Activated B cell treated with CpG ODN at 0.5 μM for 24 hours (primary cell): ENCODE measurements at regions of chr10 and their contacts with region 1.

Region 1: GRCh38 chr10:93702211-93703001 is at the start of gene FRA10AC1:
- DNase-seq: peak; percentile 87
- ATAC-seq: peak; percentile 88
- H3K4me3 Mint-ChIP-seq: no peak within 1 kb of the TSS
- H3K27ac Mint-ChIP-seq: no peak within 1 kb of the TSS
- H3K4me1 Mint-ChIP-seq: peaks cover 11% of the 10 kb centered on the region
- H3K27me3 Mint-ChIP-seq: no peaks in the 10 kb centered on the region
- CTCF ChIP-seq: no peak
- total RNA-seq, gene FRA10AC1: 20.3 and 24.8 TPM in 2 replicates

Region 2: GRCh38 chr10:92290837-92291615 is 1411.4 kb before region 1 on chr10 and contains the starts of genes CPEB3 and MARCHF5:
- CTCF ChIA-PET with region 1: no interaction called
- POLR2A ChIA-PET with region 1: no interaction called
- intact Hi-C with region 1: loop called (anchors 10 kb)
- DNase-seq: peak; percentile 87
- ATAC-seq: peak; percentile 97
- H3K4me3 Mint-ChIP-seq: peak within 1 kb of the TSS; percentile 96
- H3K27ac Mint-ChIP-seq: peak within 1 kb of the TSS; percentile 84
- H3K4me1 Mint-ChIP-seq: peaks cover 28% of the 10 kb centered on the region
- H3K27me3 Mint-ChIP-seq: no peaks in the 10 kb centered on the region
- CTCF ChIP-seq: no peak
- total RNA-seq, gene CPEB3: 2.2 and 2.5 TPM in 2 replicates
- total RNA-seq, gene MARCHF5: 21.6 and 26.5 TPM in 2 replicates

Region 3: GRCh38 chr10:92552310-92552709 is 1150.1 kb before region 1 on chr10:
- CTCF ChIA-PET with region 1: no interaction called
- POLR2A ChIA-PET with region 1: no interaction called
- intact Hi-C with region 1: no loop called
- DNase-seq: no peak
- ATAC-seq: no peak
- H3K4me3 Mint-ChIP-seq: no peak overlapping the region
- H3K27ac Mint-ChIP-seq: no peak overlapping the region
- H3K4me1 Mint-ChIP-seq: peaks cover 17% of the 10 kb centered on the region
- H3K27me3 Mint-ChIP-seq: no peaks in the 10 kb centered on the region
- CTCF ChIP-seq: no peak

Region 4: DNA sequence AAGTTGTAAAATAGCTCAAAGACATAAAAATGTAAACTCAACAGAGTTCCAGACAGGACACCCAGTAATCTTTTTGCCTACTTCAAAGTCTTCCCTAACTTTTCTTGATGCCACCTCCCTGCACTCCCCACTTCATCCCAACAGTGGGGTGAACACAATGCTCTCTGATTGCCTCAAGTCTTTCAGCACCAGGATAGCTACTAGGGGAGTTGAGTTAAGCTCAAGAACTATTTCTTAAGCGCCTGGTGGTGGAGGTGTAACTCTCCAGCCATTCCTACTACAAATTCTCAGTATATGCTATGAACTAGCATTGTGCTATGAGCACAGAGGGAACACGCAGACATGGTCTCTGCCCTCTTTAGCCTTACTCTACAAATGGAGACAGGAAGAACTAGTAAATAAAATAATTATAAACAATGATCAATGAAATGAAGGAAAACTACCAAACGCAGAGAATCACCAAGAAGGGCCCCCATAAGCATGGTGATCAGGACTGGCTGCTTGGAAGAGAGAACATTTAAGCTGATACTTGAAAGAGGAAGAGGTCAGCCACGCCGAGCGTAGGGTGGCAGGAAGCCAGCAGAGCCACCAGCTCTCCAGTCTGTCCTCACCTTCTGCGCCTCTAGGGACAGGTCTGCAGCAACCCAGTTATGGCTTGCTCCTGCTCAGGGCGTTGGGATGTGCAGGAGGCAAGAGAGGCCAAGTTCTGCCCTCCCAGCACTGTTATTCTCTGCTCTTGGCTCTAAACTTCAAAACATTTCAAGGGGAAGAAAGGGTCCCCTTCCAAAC is 16.7 kb after region 1 on chr10:
- CTCF ChIA-PET with region 1: no interaction called
- POLR2A ChIA-PET with region 1: interaction called, 12 read pairs
- intact Hi-C with region 1: loop called (anchors 1 kb)
- DNase-seq: no peak
- ATAC-seq: peak; percentile 27
- H3K4me3 Mint-ChIP-seq: no peak overlapping the region
- H3K27ac Mint-ChIP-seq: no peak overlapping the region
- H3K4me1 Mint-ChIP-seq: peaks cover 23% of the 10 kb centered on the region
- H3K27me3 Mint-ChIP-seq: peaks cover 19% of the 10 kb centered on the region
- CTCF ChIP-seq: no peak

Region 5: GRCh38 chr10:93816123-93816747 is 113.8 kb after region 1 on chr10:
- CTCF ChIA-PET with region 1: interaction called, 21 read pairs
- POLR2A ChIA-PET with region 1: interaction called, 7 read pairs
- intact Hi-C with region 1: loop called (anchors 1 kb)
- DNase-seq: no peak
- ATAC-seq: peak; percentile 45
- H3K4me3 Mint-ChIP-seq: no peak overlapping the region
- H3K27ac Mint-ChIP-seq: no peak overlapping the region
- H3K4me1 Mint-ChIP-seq: no peaks in the 10 kb centered on the region
- H3K27me3 Mint-ChIP-seq: peaks cover 38% of the 10 kb centered on the region
- CTCF ChIP-seq: no peak

Region 6: DNA sequence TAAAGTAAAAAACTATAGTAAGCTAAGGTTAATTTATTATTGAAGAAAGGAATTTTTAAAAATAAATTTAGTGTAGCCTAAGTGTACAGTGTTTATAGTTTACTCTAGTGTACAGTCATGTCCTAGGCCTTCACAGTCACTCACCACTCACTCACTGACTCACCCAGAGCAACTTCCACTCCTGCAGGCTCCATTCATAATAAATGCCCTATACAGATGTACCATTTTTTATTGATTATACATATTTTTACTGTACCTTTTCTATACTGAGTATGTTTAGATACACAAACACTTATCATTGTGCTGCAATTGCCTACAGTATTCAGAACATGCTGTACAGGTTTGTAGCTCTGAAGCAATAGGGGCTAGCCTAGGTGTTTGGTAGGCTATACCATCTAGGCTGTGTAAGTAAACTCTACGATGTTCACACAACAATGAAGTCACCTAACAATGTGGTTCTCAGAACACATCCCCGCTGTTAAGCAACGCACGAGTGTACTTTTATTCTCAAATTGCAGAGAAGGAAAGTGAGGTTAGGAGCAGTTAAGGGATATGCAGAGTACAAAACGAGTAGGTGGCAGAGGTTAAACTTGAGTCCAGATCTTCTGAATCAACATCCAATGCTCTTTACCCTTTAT is 252.4 kb after region 1 on chr10:
- CTCF ChIA-PET with region 1: no interaction called
- POLR2A ChIA-PET with region 1: no interaction called
- intact Hi-C with region 1: no loop called
- DNase-seq: no peak
- ATAC-seq: no peak
- H3K4me3 Mint-ChIP-seq: no peak overlapping the region
- H3K27ac Mint-ChIP-seq: no peak overlapping the region
- H3K4me1 Mint-ChIP-seq: no peaks in the 10 kb centered on the region
- H3K27me3 Mint-ChIP-seq: no peaks in the 10 kb centered on the region
- CTCF ChIP-seq: no peak

Region 7: DNA sequence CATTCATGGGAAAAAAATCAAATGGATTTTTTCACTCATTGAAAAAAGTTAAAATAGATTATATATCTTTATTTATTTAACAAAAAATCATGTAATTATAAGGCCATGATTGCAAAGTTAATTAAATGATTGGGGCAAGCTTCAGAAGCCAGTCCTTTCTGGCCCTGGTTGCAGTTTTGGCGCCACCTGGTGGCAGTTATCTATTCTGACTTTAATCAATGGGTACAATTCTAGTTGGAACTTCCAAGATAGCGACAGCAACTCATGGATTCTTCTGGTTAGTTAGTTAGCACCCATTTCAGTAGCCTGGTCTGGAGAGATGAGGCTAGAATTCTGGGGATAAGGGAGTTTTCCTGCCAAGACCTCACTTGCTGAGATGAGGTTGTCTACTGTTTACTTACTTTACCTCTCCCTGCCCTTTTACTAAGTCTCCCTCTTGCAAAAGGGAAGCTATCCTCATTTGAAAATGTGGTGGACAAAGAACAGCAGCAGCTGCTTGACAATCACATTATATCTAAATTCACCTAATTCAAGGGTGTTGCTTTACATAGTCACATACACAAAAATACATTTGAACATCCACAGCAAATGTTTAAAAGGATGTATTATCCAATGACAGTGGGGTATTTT is 618.0 kb after region 1 on chr10:
- CTCF ChIA-PET with region 1: no interaction called
- POLR2A ChIA-PET with region 1: no interaction called
- intact Hi-C with region 1: loop called (anchors 1 kb)
- DNase-seq: peak; percentile 27
- ATAC-seq: no peak
- H3K4me3 Mint-ChIP-seq: no peak overlapping the region
- H3K27ac Mint-ChIP-seq: no peak overlapping the region
- H3K4me1 Mint-ChIP-seq: no peaks in the 10 kb centered on the region
- H3K27me3 Mint-ChIP-seq: no peaks in the 10 kb centered on the region
- CTCF ChIP-seq: peak; percentile 40

Region 8: GRCh38 chr10:94545391-94546048 is 843.1 kb after region 1 on chr10 and contains the start of gene HELLS:
- CTCF ChIA-PET with region 1: no interaction called
- POLR2A ChIA-PET with region 1: interaction called, 4 read pairs
- intact Hi-C with region 1: loop called (anchors 2 kb)
- DNase-seq: peak; percentile 60
- ATAC-seq: peak; percentile 81
- H3K4me3 Mint-ChIP-seq: peak within 1 kb of the TSS; percentile 99
- H3K27ac Mint-ChIP-seq: peak within 1 kb of the TSS; percentile 87
- H3K4me1 Mint-ChIP-seq: peaks cover 23% of the 10 kb centered on the region
- H3K27me3 Mint-ChIP-seq: peaks cover 2% of the 10 kb centered on the region
- CTCF ChIP-seq: no peak
- total RNA-seq, gene HELLS: 23.8 and 27.3 TPM in 2 replicates